ENCODE measurements at regions of chr7 and their contacts with region 1.

Region 1: GRCh38 chr7:70693686-70694360 is 438.1 kb upstream of the GALNT17 start:
- DNase-seq: no peak
- H3K4me3 Mint-ChIP-seq: peak overlapping the region; percentile 48
- H3K27ac Mint-ChIP-seq: no peak overlapping the region
- H3K4me1 Mint-ChIP-seq: peaks cover 9% of the 10 kb centered on the region
- H3K27me3 Mint-ChIP-seq: peaks cover 37% of the 10 kb centered on the region

Region 2: DNA sequence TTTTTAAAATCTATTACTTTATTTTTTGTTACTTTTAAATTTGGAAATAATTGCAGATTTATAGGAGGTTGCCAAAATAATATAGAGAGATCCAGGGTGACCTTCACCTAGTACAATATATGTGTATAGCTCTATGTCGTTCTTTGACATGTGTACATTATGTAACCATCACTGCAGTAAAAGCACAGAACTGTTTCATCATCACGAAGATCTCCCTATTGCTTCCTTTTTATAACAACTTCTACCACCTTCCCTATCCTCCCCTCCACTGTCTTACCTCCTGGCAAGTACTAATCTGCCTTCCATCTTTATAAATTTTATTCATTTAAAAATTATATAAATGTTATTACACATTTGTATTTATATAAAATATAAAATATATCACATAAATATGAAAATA is 844.6 kb before region 1 on chr7:
- CTCF ChIA-PET with region 1: no interaction called
- intact Hi-C with region 1: no loop called
- DNase-seq: no peak
- H3K4me3 Mint-ChIP-seq: no peak overlapping the region
- H3K27ac Mint-ChIP-seq: no peak overlapping the region
- H3K4me1 Mint-ChIP-seq: no peaks in the 10 kb centered on the region
- H3K27me3 Mint-ChIP-seq: no peaks in the 10 kb centered on the region

Region 3: DNA sequence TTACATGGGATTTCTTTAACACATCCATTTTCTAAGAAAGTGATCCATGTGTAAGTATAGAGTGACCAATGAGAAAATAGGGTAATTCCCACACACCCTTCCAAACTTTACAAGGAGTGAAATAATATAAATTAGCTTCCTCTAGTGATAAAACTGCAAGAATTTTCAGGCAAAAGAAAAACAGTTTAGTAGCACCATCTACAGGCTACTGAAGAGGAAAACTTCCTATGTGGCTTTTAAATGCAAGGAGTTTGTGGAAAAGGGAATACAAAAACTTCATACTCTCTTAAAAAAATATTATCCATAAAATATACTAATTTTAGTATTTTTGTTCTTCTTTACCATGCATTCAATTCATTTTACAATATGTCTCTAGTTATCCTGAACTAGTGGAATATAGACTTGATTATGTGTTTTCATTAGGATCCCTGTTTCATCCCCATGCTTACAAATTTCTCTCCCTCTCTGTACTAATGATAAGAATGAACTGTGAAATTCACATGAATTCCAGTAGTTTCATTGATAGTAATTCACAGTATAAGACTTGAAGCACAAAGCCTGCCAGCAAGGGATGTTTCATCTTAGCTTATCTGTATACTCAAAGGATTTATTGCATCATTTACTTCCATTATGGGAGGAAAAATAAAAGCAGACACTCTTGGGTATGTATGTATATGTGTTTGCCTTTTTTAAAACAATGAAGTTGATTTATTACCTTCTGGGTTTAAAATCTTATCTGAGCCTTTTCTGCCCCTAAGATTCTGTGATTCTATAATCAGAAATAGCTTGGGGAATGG is 652.7 kb before region 1 on chr7:
- CTCF ChIA-PET with region 1: no interaction called
- intact Hi-C with region 1: loop called (anchors 5 kb)
- DNase-seq: no peak
- H3K4me3 Mint-ChIP-seq: no peak overlapping the region
- H3K27ac Mint-ChIP-seq: no peak overlapping the region
- H3K4me1 Mint-ChIP-seq: no peaks in the 10 kb centered on the region
- H3K27me3 Mint-ChIP-seq: no peaks in the 10 kb centered on the region

Region 4: DNA sequence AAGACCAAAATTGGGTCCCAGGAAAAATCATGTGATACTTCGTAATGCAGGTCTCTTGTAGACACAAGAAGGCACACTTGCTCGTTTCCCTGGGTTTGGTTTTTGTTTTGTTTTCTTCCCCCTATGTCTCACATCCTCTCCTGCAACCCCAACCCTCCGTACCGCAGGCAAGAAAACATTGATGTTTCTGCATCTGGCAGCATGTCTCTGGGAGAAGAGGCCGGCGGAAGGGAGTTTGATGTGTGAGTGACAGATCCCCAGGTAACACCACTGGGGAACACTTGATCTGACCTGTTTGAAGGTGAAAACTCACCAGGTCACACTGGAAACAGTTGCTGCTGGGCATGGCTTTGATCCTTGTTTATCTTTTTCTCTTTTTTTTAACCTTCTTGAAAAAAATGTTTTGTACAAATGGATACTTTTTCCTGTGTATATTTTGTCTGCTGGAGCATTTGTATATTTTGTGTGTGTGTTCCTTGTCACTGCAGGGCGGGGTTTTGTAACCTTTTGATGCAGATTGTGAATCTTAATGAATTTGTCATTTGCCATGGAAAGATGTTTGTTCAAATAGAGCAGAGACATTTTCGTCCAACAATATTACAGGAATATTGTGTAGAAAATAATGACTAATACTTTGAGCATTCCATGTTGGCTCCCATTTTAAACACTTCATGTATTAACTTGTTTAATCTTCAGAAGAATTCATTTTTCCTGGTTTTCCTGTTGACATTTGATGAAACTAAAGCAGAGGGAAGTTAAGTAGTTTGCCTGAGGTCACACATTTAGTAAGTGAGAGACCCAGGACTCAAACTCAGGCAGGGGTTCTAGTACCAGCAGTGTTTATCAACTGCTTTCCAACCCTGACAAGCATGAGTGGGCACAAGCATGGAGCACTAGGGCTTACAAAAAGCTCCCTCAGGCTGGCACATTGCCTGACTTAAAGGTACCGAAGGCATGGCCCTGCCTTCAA is 376.8 kb before region 1 on chr7:
- CTCF ChIA-PET with region 1: no interaction called
- intact Hi-C with region 1: loop called (anchors 10 kb)
- DNase-seq: peak; percentile 33
- H3K4me3 Mint-ChIP-seq: no peak overlapping the region
- H3K27ac Mint-ChIP-seq: no peak overlapping the region
- H3K4me1 Mint-ChIP-seq: peaks cover 11% of the 10 kb centered on the region
- H3K27me3 Mint-ChIP-seq: no peaks in the 10 kb centered on the region

Region 5: GRCh38 chr7:70585071-70585470 is 108.8 kb before region 1 on chr7:
- CTCF ChIA-PET with region 1: no interaction called
- intact Hi-C with region 1: loop called (anchors 5 kb)
- DNase-seq: no peak
- H3K4me3 Mint-ChIP-seq: no peak overlapping the region
- H3K27ac Mint-ChIP-seq: no peak overlapping the region
- H3K4me1 Mint-ChIP-seq: no peaks in the 10 kb centered on the region
- H3K27me3 Mint-ChIP-seq: no peaks in the 10 kb centered on the region

Region 6: DNA sequence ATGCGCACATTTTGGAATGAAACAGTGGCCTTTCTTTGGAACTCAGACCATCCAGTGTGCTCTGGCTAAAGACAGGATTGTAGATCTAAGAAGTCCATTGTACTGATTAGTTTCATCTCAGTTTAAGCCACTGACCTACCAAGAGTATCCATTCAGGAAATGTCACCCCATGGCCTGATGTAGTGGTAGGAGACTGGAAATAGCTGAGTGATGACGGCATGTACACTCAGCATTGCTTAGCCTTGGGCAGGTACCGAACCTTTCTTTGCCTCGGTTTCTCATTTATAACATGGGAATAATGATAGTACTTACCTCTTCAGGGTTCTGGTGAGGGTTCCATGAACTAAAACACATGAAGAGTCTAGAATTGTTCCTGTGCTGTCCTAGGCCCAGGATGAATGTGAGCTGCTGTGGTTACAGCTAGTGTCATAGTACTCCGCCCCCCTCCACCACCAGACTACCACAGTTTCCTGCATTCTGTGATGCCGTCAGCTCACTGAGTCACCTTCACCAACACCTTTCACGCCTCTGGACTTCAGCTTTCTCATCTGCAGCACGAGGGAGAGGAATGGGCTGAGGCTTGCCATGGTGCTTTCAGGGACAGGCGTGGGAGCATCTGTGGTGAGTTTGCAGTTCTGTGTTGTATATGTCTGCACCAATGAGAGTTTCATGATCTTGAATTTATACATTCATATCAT is 45.9 kb before region 1 on chr7:
- CTCF ChIA-PET with region 1: no interaction called
- intact Hi-C with region 1: loop called (anchors 5 kb)
- DNase-seq: peak; percentile 84
- H3K4me3 Mint-ChIP-seq: no peak overlapping the region
- H3K27ac Mint-ChIP-seq: no peak overlapping the region
- H3K4me1 Mint-ChIP-seq: peaks cover 8% of the 10 kb centered on the region
- H3K27me3 Mint-ChIP-seq: no peaks in the 10 kb centered on the region

Measured in activated naive CD4-positive, alpha-beta T cell treated with anti-CD3 and anti-CD28 coated beads for 36 hours (primary cell).